ENCODE measurements at regions of chr6 and their contacts with region 1.

Region 1: GRCh38 chr6:16332175-16332542 is 93.8 kb downstream of the GMPR start:
- DNase-seq: peak; percentile 86
- CTCF ChIP-seq: peak; percentile 80

Region 2: GRCh38 chr6:16514249-16514648 is 182.1 kb after region 1 on chr6:
- in situ Hi-C with region 1: loop called (anchors 10 kb)
- DNase-seq: peak; percentile 40
- CTCF ChIP-seq: peak; percentile 55

Region 3: GRCh38 chr6:16761471-16762267 is 429.5 kb after region 1 on chr6:
- in situ Hi-C with region 1: loop called (anchors 10 kb)
- DNase-seq: peak; percentile 87
- CTCF ChIP-seq: peak; percentile 59

Region 4: GRCh38 chr6:17086469-17086868 is 754.3 kb after region 1 on chr6:
- in situ Hi-C with region 1: loop called (anchors 25 kb)
- DNase-seq: peak; percentile 34
- CTCF ChIP-seq: peak; percentile 56

Measured in GM13977 (cell line).